ENCODE measurements at regions of chr5 and their contacts with region 1.

Region 1: GRCh38 chr5:177403792-177404640 is 3.6 kb upstream of the PFN3 start:
- DNase-seq: peak; percentile 74 to 94 (median 85)
- ATAC-seq: peak; percentile 73
- H3K4me3 ChIP-seq: peak overlapping the region; percentile 52 to 72
- H3K4me3 Mint-ChIP-seq: peak overlapping the region; percentile 79
- H3K27ac ChIP-seq: peak overlapping the region in 1 of 2 experiments; percentile 59
- H3K27ac Mint-ChIP-seq: no peak overlapping the region
- H3K4me1 ChIP-seq: peaks cover 44% of the 10 kb centered on the region
- H3K4me1 Mint-ChIP-seq: peaks cover 38% of the 10 kb centered on the region
- H3K27me3 ChIP-seq: peaks cover 0 to 2% of the 10 kb centered on the region in 2 experiments
- H3K27me3 Mint-ChIP-seq: no peaks in the 10 kb centered on the region
- CTCF ChIP-seq: peak; percentile 52

Region 2: DNA sequence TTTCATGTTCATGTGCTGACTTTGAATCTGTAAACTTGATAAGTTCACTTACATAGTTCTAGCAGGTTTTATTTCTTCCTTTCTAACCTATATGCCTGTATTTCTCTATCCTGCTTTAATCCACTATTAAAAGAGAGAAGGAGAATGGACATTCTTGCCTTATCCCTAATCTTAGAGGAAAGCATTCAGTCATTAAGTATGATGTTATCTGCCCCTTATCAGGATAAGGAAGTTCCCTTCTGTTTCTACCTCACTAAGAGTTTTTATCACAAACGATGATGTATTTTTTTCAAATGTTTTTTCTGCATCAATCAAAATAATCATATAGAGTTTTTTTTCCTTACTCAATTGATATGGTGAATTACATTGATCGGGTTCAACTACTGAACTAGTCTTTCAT is 1993.1 kb before region 1 on chr5:
- CTCF ChIA-PET with region 1: no interaction called
- POLR2A ChIA-PET with region 1: no interaction called
- intact Hi-C with region 1: no loop called
- DNase-seq: no peak
- ATAC-seq: no peak
- H3K4me3 ChIP-seq: no peak overlapping the region
- H3K4me3 Mint-ChIP-seq: no peak overlapping the region
- H3K27ac ChIP-seq: no peak overlapping the region
- H3K27ac Mint-ChIP-seq: no peak overlapping the region
- H3K4me1 ChIP-seq: no peaks in the 10 kb centered on the region
- H3K4me1 Mint-ChIP-seq: no peaks in the 10 kb centered on the region
- H3K27me3 ChIP-seq: no peaks in the 10 kb centered on the region
- H3K27me3 Mint-ChIP-seq: peaks cover 14% of the 10 kb centered on the region
- CTCF ChIP-seq: no peak

Region 3: GRCh38 chr5:176619203-176619568 is 784.8 kb before region 1 on chr5:
- CTCF ChIA-PET with region 1: no interaction called
- POLR2A ChIA-PET with region 1: no interaction called
- intact Hi-C with region 1: no loop called
- DNase-seq: peak; percentile 52 to 89 (median 77)
- ATAC-seq: peak; percentile 98
- H3K4me3 ChIP-seq: peak overlapping the region; percentile 12 to 19
- H3K4me3 Mint-ChIP-seq: peak overlapping the region; percentile 53
- H3K27ac ChIP-seq: no peak overlapping the region
- H3K27ac Mint-ChIP-seq: no peak overlapping the region
- H3K4me1 ChIP-seq: peaks cover 21% of the 10 kb centered on the region
- H3K4me1 Mint-ChIP-seq: peaks cover 8% of the 10 kb centered on the region
- H3K27me3 ChIP-seq: peaks cover 17 to 24% of the 10 kb centered on the region in 2 experiments
- H3K27me3 Mint-ChIP-seq: peaks cover 53% of the 10 kb centered on the region
- CTCF ChIP-seq: peak; percentile 17

Region 4: GRCh38 chr5:177311723-177312648 is 92.0 kb before region 1 on chr5 and contains the start of gene MXD3:
- CTCF ChIA-PET with region 1: interaction called, 59 read pairs
- POLR2A ChIA-PET with region 1: no interaction called
- intact Hi-C with region 1: loop called in 1 of 2 experiments (anchors 1 kb)
- DNase-seq: peak; percentile 88 to 96 (median 94)
- ATAC-seq: peak; percentile 91
- H3K4me3 ChIP-seq: peak within 1 kb of the TSS; percentile 63 to 79
- H3K4me3 Mint-ChIP-seq: peak within 1 kb of the TSS; percentile 80
- H3K27ac ChIP-seq: peak within 1 kb of the TSS in 1 of 2 experiments; percentile 58
- H3K27ac Mint-ChIP-seq: peak within 1 kb of the TSS; percentile 49
- H3K4me1 ChIP-seq: peaks cover 36% of the 10 kb centered on the region
- H3K4me1 Mint-ChIP-seq: peaks cover 25% of the 10 kb centered on the region
- H3K27me3 ChIP-seq: no peaks in the 10 kb centered on the region
- H3K27me3 Mint-ChIP-seq: peaks cover 2% of the 10 kb centered on the region
- CTCF ChIP-seq: no peak
- total RNA-seq, gene MXD3: 6.2 to 8.5 TPM

Region 5: GRCh38 chr5:177362610-177363507 is 41.2 kb before region 1 on chr5:
- CTCF ChIA-PET with region 1: interaction called, 19 read pairs
- POLR2A ChIA-PET with region 1: no interaction called
- intact Hi-C with region 1: no loop called
- DNase-seq: peak; percentile 31 to 92 (median 67)
- ATAC-seq: peak; percentile 74
- H3K4me3 ChIP-seq: peak overlapping the region; percentile 47 to 54
- H3K4me3 Mint-ChIP-seq: peak overlapping the region; percentile 84
- H3K27ac ChIP-seq: peak overlapping the region; percentile 46 to 70
- H3K27ac Mint-ChIP-seq: peak overlapping the region; percentile 89
- H3K4me1 ChIP-seq: peaks cover 70% of the 10 kb centered on the region
- H3K4me1 Mint-ChIP-seq: peaks cover 67% of the 10 kb centered on the region
- H3K27me3 ChIP-seq: no peaks in the 10 kb centered on the region
- H3K27me3 Mint-ChIP-seq: no peaks in the 10 kb centered on the region
- CTCF ChIP-seq: no peak

Region 6: DNA sequence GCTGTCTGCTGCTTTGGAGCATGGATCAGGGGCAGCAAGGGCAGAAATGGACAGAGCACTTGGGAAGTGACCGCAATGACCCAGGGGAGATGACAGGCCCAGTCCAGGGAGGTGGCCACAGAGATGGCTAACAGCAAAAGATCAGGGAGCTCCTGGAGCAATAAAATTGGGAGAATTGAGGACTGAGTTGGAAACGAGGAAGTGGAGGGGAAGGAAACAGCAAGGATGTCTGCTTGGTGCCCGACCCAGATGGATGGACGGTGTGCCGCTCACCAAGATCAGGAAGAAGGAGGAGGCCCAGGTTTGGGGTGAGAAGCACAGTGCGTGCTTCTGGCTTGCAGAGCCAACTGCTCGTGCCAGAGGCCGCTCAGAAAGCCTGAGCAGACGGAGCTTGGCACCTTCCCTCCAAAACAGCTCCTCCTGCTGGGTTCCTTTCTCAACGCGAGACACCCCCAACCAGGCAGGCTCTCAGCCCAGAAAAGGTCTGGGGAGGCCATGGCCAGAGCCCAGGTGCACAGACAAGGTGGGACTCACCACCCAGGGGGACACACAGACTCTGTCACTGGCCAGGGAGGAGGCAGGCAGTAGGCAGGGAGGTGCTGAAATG is 21.5 kb before region 1 on chr5:
- CTCF ChIA-PET with region 1: interaction called, 37 read pairs
- POLR2A ChIA-PET with region 1: no interaction called
- intact Hi-C with region 1: no loop called
- DNase-seq: peak in 3 of 9 experiments; percentile 37 to 64 (median 51)
- ATAC-seq: peak; percentile 70
- H3K4me3 ChIP-seq: no peak overlapping the region
- H3K4me3 Mint-ChIP-seq: no peak overlapping the region
- H3K27ac ChIP-seq: no peak overlapping the region
- H3K27ac Mint-ChIP-seq: no peak overlapping the region
- H3K4me1 ChIP-seq: peaks cover 32% of the 10 kb centered on the region
- H3K4me1 Mint-ChIP-seq: peaks cover 30% of the 10 kb centered on the region
- H3K27me3 ChIP-seq: no peaks in the 10 kb centered on the region
- H3K27me3 Mint-ChIP-seq: no peaks in the 10 kb centered on the region
- CTCF ChIP-seq: no peak

Region 7: GRCh38 chr5:177431317-177432142 is 27.5 kb after region 1 on chr5:
- CTCF ChIA-PET with region 1: interaction called, 628 read pairs
- POLR2A ChIA-PET with region 1: interaction called, 48 read pairs
- intact Hi-C with region 1: loop called (anchors 1 kb)
- DNase-seq: peak in 8 of 9 experiments; percentile 59 to 93 (median 78)
- ATAC-seq: peak; percentile 44
- H3K4me3 ChIP-seq: peak overlapping the region; percentile 37 to 98
- H3K4me3 Mint-ChIP-seq: peak overlapping the region; percentile 91
- H3K27ac ChIP-seq: peak overlapping the region; percentile 69 to 89
- H3K27ac Mint-ChIP-seq: peak overlapping the region; percentile 91
- H3K4me1 ChIP-seq: peaks cover 91% of the 10 kb centered on the region
- H3K4me1 Mint-ChIP-seq: peaks cover 66% of the 10 kb centered on the region
- H3K27me3 ChIP-seq: no peaks in the 10 kb centered on the region
- H3K27me3 Mint-ChIP-seq: no peaks in the 10 kb centered on the region
- CTCF ChIP-seq: no peak

Region 8: GRCh38 chr5:177454397-177455035 is 50.5 kb after region 1 on chr5:
- CTCF ChIA-PET with region 1: interaction called, 628 read pairs
- POLR2A ChIA-PET with region 1: interaction called, 185 read pairs
- intact Hi-C with region 1: loop called (anchors 1 kb)
- DNase-seq: peak; percentile 90 to 98 (median 94)
- ATAC-seq: peak; percentile 55
- H3K4me3 ChIP-seq: peak overlapping the region; percentile 64 to 93
- H3K4me3 Mint-ChIP-seq: peak overlapping the region; percentile 86
- H3K27ac ChIP-seq: peak overlapping the region; percentile 88 to 96
- H3K27ac Mint-ChIP-seq: peak overlapping the region; percentile 85
- H3K4me1 ChIP-seq: peaks cover 16% of the 10 kb centered on the region
- H3K4me1 Mint-ChIP-seq: peaks cover 18% of the 10 kb centered on the region
- H3K27me3 ChIP-seq: no peaks in the 10 kb centered on the region
- H3K27me3 Mint-ChIP-seq: no peaks in the 10 kb centered on the region
- CTCF ChIP-seq: peak; percentile 84

Region 9: DNA sequence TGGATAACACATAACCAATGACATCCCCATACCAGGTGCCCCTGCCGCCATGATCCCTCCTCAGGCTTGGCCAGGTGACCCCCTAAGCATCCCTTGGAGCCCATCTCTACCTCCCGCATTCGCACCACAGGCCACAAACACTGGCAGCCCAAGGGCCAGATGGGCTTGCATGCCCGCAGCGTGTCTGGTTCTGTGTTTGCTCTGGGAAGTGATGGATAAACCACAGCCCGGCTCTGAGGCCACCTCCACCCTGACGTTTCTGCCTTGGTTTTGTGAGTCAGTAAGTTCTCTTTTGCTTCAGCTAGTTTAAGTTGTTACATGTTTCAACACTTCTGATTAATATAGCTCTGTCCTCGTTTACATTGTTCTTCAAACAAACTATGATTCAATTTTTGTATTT is 1001.0 kb after region 1 on chr5:
- CTCF ChIA-PET with region 1: no interaction called
- POLR2A ChIA-PET with region 1: no interaction called
- intact Hi-C with region 1: no loop called
- DNase-seq: no peak
- ATAC-seq: no peak
- H3K4me3 ChIP-seq: no peak overlapping the region
- H3K4me3 Mint-ChIP-seq: no peak overlapping the region
- H3K27ac ChIP-seq: no peak overlapping the region
- H3K27ac Mint-ChIP-seq: no peak overlapping the region
- H3K4me1 ChIP-seq: no peaks in the 10 kb centered on the region
- H3K4me1 Mint-ChIP-seq: no peaks in the 10 kb centered on the region
- H3K27me3 ChIP-seq: no peaks in the 10 kb centered on the region
- H3K27me3 Mint-ChIP-seq: peaks cover 4% of the 10 kb centered on the region
- CTCF ChIP-seq: no peak

Measured in CD8-positive, alpha-beta T cell (primary cell).